ENCODE measurements at regions of chr7 and their contacts with region 1.

Region 1: DNA sequence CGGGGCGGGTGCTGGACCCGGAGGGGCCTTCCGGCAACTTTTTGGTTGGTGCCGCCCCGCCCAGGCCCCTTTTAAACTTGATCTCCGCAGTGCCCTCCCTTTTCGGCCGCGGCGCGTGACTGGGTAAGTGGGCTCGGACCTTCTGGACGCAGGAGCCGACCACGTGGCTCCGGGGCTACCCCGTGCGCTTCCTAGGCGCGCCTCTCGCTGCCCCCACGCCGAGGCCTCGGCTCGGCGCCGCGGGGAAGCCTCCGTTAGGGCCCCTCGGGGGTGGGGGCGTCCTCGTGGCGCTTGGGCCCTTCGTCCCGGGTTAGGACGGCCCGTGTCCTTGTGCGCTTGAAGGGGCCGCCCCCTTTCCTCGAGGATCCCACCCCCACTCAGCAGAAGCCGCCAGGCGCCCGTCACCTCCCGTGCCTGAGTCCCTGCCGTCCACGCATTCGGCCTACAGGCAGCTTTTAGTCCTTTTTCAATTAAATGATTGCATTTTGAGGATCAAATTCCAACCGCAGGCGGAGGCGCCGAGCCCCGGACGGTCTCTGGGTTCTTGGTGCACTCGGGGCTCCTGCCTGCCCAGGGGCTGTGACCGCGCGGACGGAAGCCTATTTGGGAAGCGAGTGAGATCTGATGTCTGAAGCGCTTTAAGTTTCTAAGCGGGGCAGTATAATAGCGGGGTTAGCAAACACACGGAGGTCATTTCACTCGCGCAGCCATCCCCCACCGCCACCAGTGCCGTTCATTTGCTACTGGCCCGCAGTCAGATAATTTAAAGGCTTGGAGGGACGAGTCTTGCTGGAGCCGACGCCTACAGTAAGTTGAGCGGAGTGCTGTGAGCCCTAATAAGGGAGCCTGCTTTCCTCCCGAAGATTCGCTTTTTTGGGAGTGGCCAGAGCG is 31.8 kb upstream of the TOMM7 start:
- DNase-seq: peak; percentile 84
- ATAC-seq: peak; percentile 81
- H3K4me3 Mint-ChIP-seq: peak overlapping the region; percentile 96
- H3K27ac Mint-ChIP-seq: peak overlapping the region; percentile 91
- H3K4me1 Mint-ChIP-seq: peaks cover 54% of the 10 kb centered on the region
- H3K27me3 Mint-ChIP-seq: no peaks in the 10 kb centered on the region
- CTCF ChIP-seq: no peak

Region 2: GRCh38 chr7:22822486-22823141 is 31.8 kb before region 1 on chr7 and contains the start of gene TOMM7:
- CTCF ChIA-PET with region 1: no interaction called
- POLR2A ChIA-PET with region 1: interaction called, 3 read pairs
- intact Hi-C with region 1: loop called (anchors 1 kb)
- DNase-seq: peak; percentile 66
- ATAC-seq: peak; percentile 99
- H3K4me3 Mint-ChIP-seq: peak within 1 kb of the TSS; percentile 99
- H3K27ac Mint-ChIP-seq: peak within 1 kb of the TSS; percentile 91
- H3K4me1 Mint-ChIP-seq: peaks cover 39% of the 10 kb centered on the region
- H3K27me3 Mint-ChIP-seq: peaks cover 11% of the 10 kb centered on the region
- CTCF ChIP-seq: no peak
- total RNA-seq, gene TOMM7: 324 and 406 TPM in 2 replicates

Region 3: GRCh38 chr7:22872096-22872807 is 17.8 kb after region 1 on chr7:
- CTCF ChIA-PET with region 1: interaction called, 3 read pairs
- POLR2A ChIA-PET with region 1: interaction called, 4 read pairs
- intact Hi-C with region 1: loop called (anchors 1 kb)
- DNase-seq: peak; percentile 21
- ATAC-seq: peak; percentile 94
- H3K4me3 Mint-ChIP-seq: peak overlapping the region; percentile 77
- H3K27ac Mint-ChIP-seq: peak overlapping the region; percentile 32
- H3K4me1 Mint-ChIP-seq: peaks cover 35% of the 10 kb centered on the region
- H3K27me3 Mint-ChIP-seq: no peaks in the 10 kb centered on the region
- CTCF ChIP-seq: no peak

Region 4: GRCh38 chr7:22958742-22959141 is 104.3 kb after region 1 on chr7:
- CTCF ChIA-PET with region 1: no interaction called
- POLR2A ChIA-PET with region 1: no interaction called
- intact Hi-C with region 1: loop called (anchors 5 kb)
- DNase-seq: no peak
- ATAC-seq: no peak
- H3K4me3 Mint-ChIP-seq: no peak overlapping the region
- H3K27ac Mint-ChIP-seq: no peak overlapping the region
- H3K4me1 Mint-ChIP-seq: peaks cover 9% of the 10 kb centered on the region
- H3K27me3 Mint-ChIP-seq: no peaks in the 10 kb centered on the region
- CTCF ChIP-seq: no peak

Region 5: GRCh38 chr7:23105644-23106056 is 251.2 kb after region 1 on chr7 and contains the start of gene KLHL7:
- CTCF ChIA-PET with region 1: no interaction called
- POLR2A ChIA-PET with region 1: no interaction called
- intact Hi-C with region 1: loop called (anchors 1 kb)
- DNase-seq: peak; percentile 98
- ATAC-seq: peak; percentile 95
- H3K4me3 Mint-ChIP-seq: peak within 1 kb of the TSS; percentile 94
- H3K27ac Mint-ChIP-seq: peak within 1 kb of the TSS; percentile 97
- H3K4me1 Mint-ChIP-seq: peaks cover 32% of the 10 kb centered on the region
- H3K27me3 Mint-ChIP-seq: no peaks in the 10 kb centered on the region
- CTCF ChIP-seq: no peak
- total RNA-seq, gene KLHL7: 12.2 and 13.4 TPM in 2 replicates